ENCODE measurements at regions of chr17 and their contacts with region 1.

Region 1: DNA sequence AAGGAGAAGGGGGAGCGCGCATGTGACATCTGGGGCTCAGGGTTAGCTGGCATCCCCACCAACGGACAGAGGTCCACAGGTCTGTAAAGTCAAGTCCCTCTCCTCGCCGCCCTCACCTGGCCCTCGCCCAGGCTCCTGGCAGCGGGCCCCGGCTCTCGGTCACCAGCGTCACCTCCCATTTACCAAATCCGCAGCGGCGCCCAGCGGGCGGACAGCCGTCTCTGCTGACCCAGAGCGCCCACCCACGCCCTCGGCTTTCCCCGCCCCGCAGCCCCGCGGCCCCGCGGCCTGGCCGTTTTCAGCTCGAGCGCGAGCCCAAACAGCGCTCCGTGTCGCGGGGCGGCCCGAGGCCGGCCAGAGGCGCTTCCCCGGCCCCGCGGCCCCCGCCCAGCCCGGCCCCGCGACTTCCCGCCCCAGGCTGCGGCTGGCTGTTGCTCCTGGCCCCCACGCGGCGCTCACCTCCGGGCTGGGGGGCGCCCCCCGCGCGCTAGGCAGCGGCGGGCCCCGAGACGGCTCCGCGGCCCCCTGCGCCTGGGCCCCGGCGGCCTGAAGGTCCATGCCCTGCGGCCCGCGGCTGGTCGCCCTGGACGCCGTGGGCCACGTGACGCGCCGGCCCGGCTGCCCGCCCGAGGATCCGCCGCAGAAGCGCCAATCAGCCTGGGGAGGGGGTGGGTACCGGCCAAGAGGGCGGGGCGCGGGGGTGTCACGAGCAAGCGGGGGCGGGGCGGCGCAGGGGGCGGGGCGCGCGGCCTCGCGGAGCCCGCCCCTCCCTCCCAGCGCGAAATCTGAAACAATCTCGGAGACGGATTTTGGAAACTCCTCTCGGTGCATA is at the start of gene COPRS:
- DNase-seq: peak; percentile 74 to 92 (median 86)
- H3K4me3 ChIP-seq: peak within 1 kb of the TSS; percentile 61 to 88 (median 77)
- H3K27ac ChIP-seq: peak within 1 kb of the TSS in 57 of 59 donors; percentile 3 to 88 (median 72)
- H3K27me3 ChIP-seq: no peaks in the 10 kb centered on the region
- CTCF ChIP-seq: peak in 11 of 56 donors; percentile 3 to 23 (median 14)
- total RNA-seq, gene COPRS: 43.0 to 121 (median 76.8) TPM

Region 2: GRCh38 chr17:30831663-30832437 is 1027.0 kb before region 1 on chr17 and contains the start of gene ATAD5:
- intact Hi-C with region 1: loop called in 1 of 2 experiments (anchors 10 kb)
- DNase-seq: peak; percentile 84 to 93 (median 90)
- H3K4me3 ChIP-seq: peak within 1 kb of the TSS; percentile 59 to 99 (median 84)
- H3K27ac ChIP-seq: peak within 1 kb of the TSS in 44 of 59 donors; percentile 4 to 86 (median 58)
- H3K27me3 ChIP-seq: no peaks in the 10 kb centered on the region
- CTCF ChIP-seq: peak in 44 of 56 donors; percentile 10 to 68 (median 42)
- total RNA-seq, gene ATAD5: 1.3 to 4.1 (median 2.3) TPM

Region 3: DNA sequence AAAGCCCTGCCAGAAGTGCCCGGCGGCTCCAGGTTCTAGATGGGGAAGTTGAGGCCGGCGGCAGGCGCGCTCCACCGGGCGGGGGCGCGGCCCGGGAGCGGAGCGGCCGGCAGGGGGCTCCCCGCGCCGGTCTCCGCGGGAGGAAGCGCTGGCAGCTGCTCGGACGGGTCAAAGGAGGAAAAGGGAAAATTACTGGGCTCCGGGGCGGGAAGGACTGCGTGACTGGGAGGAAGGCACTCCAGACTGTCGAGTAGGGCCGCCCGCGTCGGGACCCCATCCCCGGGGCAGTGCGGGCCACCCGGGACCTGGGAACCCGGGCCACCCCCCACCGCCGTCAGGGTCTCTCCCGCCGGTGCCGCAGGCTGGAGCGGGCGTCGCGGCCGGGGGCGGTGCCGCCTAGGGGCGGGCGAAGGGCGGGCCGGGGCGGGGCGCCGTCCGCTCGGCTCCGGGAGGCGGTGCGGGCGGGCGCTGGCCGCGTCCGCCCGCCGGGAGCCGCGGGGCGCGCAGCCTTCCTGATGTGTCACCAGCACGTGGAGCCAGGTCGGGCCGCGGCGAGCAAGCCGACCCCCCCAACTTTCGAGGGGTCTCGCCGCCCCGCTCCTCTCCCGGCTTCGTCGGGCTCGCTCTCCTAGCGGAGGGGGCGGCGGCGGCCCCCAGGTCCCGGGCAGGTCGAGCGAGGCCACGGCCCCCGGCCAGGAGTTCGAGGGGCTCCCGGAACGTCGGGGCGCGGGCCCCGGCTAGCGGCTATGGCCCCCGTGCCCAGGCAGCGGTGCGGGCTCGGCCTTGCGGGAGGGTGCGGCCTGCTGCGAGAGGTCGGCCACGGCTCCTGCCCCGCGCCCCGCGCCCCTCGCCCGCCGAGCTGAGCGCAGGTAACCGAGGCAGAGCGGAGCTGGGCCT is 299.9 kb before region 1 on chr17:
- intact Hi-C with region 1: loop called in 1 of 2 experiments (anchors 5 kb)
- DNase-seq: peak in 9 of 10 donors; percentile 40 to 74 (median 49)
- H3K4me3 ChIP-seq: peak overlapping the region; percentile 34 to 80 (median 64)
- H3K27ac ChIP-seq: peak overlapping the region in 51 of 59 donors; percentile 15 to 94 (median 80)
- H3K27me3 ChIP-seq: peaks cover 0 to 10% (median 0%) of the 10 kb centered on the region in 45 donors
- CTCF ChIP-seq: peak; percentile 41 to 97 (median 86)